Mammary epithelial cell (primary cell): ENCODE measurements at regions of chr16 and their contacts with region 1.

Region 1: GRCh38 chr16:55465077-55465896 is 13.7 kb upstream of the MMP2 start:
- DNase-seq: peak; percentile 66
- H3K4me3 ChIP-seq: no peak overlapping the region
- H3K27ac ChIP-seq: no peak overlapping the region
- H3K4me1 ChIP-seq: peaks cover 5% of the 10 kb centered on the region
- H3K27me3 ChIP-seq: no peaks in the 10 kb centered on the region
- CTCF ChIP-seq: peak; percentile 100

Region 2: DNA sequence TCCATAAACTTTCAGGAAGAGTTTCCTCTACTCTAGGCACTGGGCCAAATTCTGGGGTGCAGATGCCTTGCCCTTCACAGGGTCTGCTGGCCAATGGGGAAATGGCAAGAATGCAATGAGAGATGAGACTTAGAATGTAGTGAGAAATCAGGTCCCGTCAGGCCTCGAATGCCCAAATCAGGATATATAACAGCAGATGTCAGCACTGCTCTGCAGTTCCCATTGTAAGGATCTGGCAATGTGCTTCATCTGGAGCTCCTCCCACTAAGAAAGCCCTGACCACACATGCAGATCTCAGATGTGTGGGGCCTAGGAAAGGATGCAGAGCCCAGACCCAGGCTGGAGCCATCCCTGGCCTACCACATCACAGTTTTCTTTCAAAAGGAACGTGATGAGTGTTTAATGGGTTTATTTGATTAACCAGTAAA is 29.7 kb after region 1 on chr16:
- CTCF ChIA-PET with region 1: interaction called, 6 read pairs
- dilution Hi-C with region 1: no loop called
- in situ Hi-C with region 1: no loop called
- intact Hi-C with region 1: loop called (anchors 1 kb)
- DNase-seq: peak; percentile 70
- H3K4me3 ChIP-seq: no peak overlapping the region
- H3K27ac ChIP-seq: no peak overlapping the region
- H3K4me1 ChIP-seq: peaks cover 32% of the 10 kb centered on the region
- H3K27me3 ChIP-seq: no peaks in the 10 kb centered on the region
- CTCF ChIP-seq: peak; percentile 53 to 71

Region 3: DNA sequence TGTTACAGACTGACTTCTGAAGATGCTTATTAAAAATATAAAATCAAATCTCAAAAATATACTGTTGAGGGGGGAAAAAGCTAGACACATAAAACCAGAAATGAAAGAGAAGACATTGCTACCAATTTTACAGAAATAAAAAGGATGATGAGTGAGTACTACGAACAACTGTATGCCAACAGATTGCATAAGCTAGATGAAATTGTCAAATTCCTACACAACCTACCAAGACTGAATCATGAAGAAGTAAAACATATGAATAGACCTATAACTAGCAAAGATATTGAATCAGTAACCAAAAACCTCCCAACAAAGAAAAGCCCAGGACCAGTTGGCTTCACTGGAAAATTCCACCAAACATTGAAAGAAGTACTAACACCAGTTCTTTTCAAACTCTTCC is 97.6 kb after region 1 on chr16:
- CTCF ChIA-PET with region 1: no interaction called
- dilution Hi-C with region 1: loop called (anchors 5 kb)
- in situ Hi-C with region 1: no loop called
- intact Hi-C with region 1: no loop called
- DNase-seq: peak; percentile 32
- H3K4me3 ChIP-seq: no peak overlapping the region
- H3K27ac ChIP-seq: peak overlapping the region; percentile 21
- H3K4me1 ChIP-seq: peaks cover 65% of the 10 kb centered on the region
- H3K27me3 ChIP-seq: no peaks in the 10 kb centered on the region
- CTCF ChIP-seq: no peak

Region 4: DNA sequence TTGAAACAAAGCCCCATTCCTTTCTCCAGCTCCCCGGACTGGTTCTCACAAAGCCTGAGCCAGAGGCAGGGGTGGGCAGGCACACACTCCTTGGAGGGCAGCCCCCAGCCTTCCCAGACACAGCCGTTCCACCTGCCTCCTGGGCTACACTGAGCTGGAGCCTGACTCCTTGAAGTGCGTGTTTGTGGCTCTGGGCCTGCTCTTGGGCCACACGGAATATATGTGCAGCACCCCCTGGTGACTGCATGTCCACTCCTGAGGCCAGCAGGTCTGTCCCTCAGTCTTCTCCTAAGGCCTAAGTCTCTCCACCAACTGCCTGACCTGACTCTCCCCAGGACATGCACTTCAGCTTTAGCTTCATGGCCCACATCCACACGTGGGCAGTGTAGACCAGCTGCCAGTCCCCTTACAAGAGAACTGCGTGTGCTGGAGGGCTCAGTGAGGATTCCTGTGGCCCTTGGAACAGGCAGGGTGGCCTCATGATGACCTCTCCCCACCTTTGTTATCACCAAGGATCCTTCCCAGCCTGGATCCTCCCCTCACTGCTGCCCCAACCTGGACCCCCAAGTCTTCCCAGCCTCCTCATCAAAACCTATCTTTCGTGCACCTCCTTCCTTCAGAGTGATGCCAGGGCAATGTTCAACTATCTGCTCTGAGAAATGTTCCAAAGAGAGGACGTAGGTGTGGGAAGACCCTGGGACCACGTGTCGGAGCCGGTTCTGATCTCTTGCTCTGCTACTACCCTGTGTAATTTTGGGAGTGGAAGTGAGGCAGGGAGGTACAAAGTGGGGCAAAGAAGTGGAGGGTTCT is 178.1 kb after region 1 on chr16:
- CTCF ChIA-PET with region 1: no interaction called
- dilution Hi-C with region 1: no loop called
- in situ Hi-C with region 1: no loop called
- intact Hi-C with region 1: loop called (anchors 1 kb)
- DNase-seq: no peak
- H3K4me3 ChIP-seq: no peak overlapping the region
- H3K27ac ChIP-seq: no peak overlapping the region
- H3K4me1 ChIP-seq: no peaks in the 10 kb centered on the region
- H3K27me3 ChIP-seq: no peaks in the 10 kb centered on the region
- CTCF ChIP-seq: peak in 1 of 2 donors; percentile 19

Region 5: GRCh38 chr16:55735120-55735781 is 270.0 kb after region 1 on chr16:
- CTCF ChIA-PET with region 1: no interaction called
- dilution Hi-C with region 1: loop called (anchors 25 kb)
- in situ Hi-C with region 1: no loop called
- intact Hi-C with region 1: no loop called
- DNase-seq: peak; percentile 62
- H3K4me3 ChIP-seq: no peak overlapping the region
- H3K27ac ChIP-seq: no peak overlapping the region
- H3K4me1 ChIP-seq: peaks cover 5% of the 10 kb centered on the region
- H3K27me3 ChIP-seq: no peaks in the 10 kb centered on the region
- CTCF ChIP-seq: no peak

Region 6: DNA sequence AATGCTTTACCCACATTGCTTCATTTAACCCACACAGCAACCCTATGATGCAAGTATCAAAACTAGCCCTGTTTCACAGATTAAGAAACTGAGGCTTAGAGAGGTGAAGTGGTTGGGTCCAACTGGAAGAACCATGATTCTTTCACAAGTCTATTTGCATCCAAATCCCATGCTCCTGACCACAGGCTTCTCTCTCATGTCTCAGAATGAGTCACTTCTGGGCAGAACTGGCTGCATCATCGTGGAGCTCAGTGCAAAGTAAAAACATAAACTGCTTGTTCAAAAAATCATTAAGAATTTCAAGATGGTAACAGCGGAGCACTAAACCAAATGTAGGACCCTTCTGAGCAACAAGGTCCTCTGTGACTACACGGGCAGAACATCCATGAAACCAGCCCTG is 387.8 kb after region 1 on chr16:
- CTCF ChIA-PET with region 1: no interaction called
- dilution Hi-C with region 1: loop called (anchors 25 kb)
- in situ Hi-C with region 1: loop called (anchors 5 to 10 kb)
- intact Hi-C with region 1: no loop called
- DNase-seq: peak; percentile 42
- H3K4me3 ChIP-seq: no peak overlapping the region
- H3K27ac ChIP-seq: no peak overlapping the region
- H3K4me1 ChIP-seq: no peaks in the 10 kb centered on the region
- H3K27me3 ChIP-seq: no peaks in the 10 kb centered on the region
- CTCF ChIP-seq: no peak